GM12878 (cell line): ENCODE measurements at regions of chr16 and their contacts with region 1.

Region 1: DNA sequence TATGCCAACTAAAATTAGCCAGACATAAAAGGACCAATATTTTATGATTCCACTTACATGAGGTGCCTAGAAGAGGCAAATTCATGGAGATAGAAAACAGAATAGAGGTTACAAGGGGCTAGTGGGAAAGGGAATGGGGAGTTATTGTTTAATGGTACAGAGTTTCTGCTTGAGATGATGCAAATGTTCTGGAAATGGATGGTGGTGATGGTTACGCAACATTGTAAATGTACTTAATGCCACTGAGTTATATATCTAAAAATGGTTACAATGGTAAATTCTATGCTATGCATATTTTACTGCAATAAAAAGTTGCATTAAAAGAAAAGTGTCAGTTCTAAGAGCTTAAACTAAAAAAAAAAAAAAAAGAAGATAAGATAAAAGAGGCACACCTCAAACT is 17.9 kb downstream of the MT1X start:
- DNase-seq: no peak
- ATAC-seq: no peak
- H3K4me3 ChIP-seq: no peak overlapping the region
- H3K27ac ChIP-seq: no peak overlapping the region
- H3K4me1 ChIP-seq: no peaks in the 10 kb centered on the region; the same call in 1 of the 2 replicates
- H3K27me3 ChIP-seq: no peaks in the 10 kb centered on the region; a peak in 2 of 4 replicates
- CTCF ChIP-seq: no peak
- EP300 ChIP-seq: no peak
- POLR2A ChIP-seq: no peak
- RAD21 ChIP-seq: no peak

Region 2: GRCh38 chr16:56356276-56357240 is 343.6 kb before region 1 on chr16:
- CTCF ChIA-PET with region 1: interaction called, 12 read pairs
- POLR2A ChIA-PET with region 1: no interaction called
- RAD21 ChIA-PET with region 1: no interaction called
- SMC1A ChIA-PET with region 1: interaction called, 4 read pairs
- in situ Hi-C with region 1: no loop called
- intact Hi-C with region 1: no loop called
- DNase-seq: peak; percentile 46
- ATAC-seq: peak; percentile 98
- H3K4me3 ChIP-seq: peak overlapping the region; percentile 61
- H3K27ac ChIP-seq: peak overlapping the region; percentile 35
- H3K4me1 ChIP-seq: peaks cover 12% of the 10 kb centered on the region
- H3K27me3 ChIP-seq: no peaks in the 10 kb centered on the region
- CTCF ChIP-seq: peak; percentile 81 to 96 (median 87)
- EP300 ChIP-seq: 0 out of 4 replicates have a peak, but pooled peaks of 1 of the 2 experiments have one; percentile 1
- POLR2A ChIP-seq: no peak
- RAD21 ChIP-seq: peak; percentile 52

Region 3: GRCh38 chr16:56547120-56547948 is 152.9 kb before region 1 on chr16:
- CTCF ChIA-PET with region 1: interaction called, 13 read pairs
- POLR2A ChIA-PET with region 1: no interaction called
- RAD21 ChIA-PET with region 1: interaction called, 4 read pairs
- SMC1A ChIA-PET with region 1: interaction called, 4 read pairs
- in situ Hi-C with region 1: no loop called
- intact Hi-C with region 1: no loop called
- DNase-seq: no peak
- ATAC-seq: peak; percentile 45
- H3K4me3 ChIP-seq: no peak overlapping the region
- H3K27ac ChIP-seq: no peak overlapping the region
- H3K4me1 ChIP-seq: peaks cover 7% of the 10 kb centered on the region
- H3K27me3 ChIP-seq: peaks cover 0 to 2% of the 10 kb centered on the region in 2 experiments; a peak in 1 of 4 replicates
- CTCF ChIP-seq: no peak
- EP300 ChIP-seq: no peak
- POLR2A ChIP-seq: no peak
- RAD21 ChIP-seq: no peak

Region 4: GRCh38 chr16:56583351-56584168 is 116.6 kb before region 1 on chr16:
- CTCF ChIA-PET with region 1: interaction called, 11 read pairs
- POLR2A ChIA-PET with region 1: no interaction called
- RAD21 ChIA-PET with region 1: interaction called, 4 read pairs
- SMC1A ChIA-PET with region 1: interaction called, 10 read pairs
- in situ Hi-C with region 1: loop called (anchors 5 kb)
- intact Hi-C with region 1: no loop called
- DNase-seq: no peak
- ATAC-seq: no peak
- H3K4me3 ChIP-seq: no peak overlapping the region
- H3K27ac ChIP-seq: no peak overlapping the region
- H3K4me1 ChIP-seq: no peaks in the 10 kb centered on the region
- H3K27me3 ChIP-seq: peaks cover 2 to 4% of the 10 kb centered on the region in 2 experiments; a peak in 1 of 4 replicates
- CTCF ChIP-seq: no peak
- EP300 ChIP-seq: no peak
- POLR2A ChIP-seq: no peak
- RAD21 ChIP-seq: no peak

Region 5: DNA sequence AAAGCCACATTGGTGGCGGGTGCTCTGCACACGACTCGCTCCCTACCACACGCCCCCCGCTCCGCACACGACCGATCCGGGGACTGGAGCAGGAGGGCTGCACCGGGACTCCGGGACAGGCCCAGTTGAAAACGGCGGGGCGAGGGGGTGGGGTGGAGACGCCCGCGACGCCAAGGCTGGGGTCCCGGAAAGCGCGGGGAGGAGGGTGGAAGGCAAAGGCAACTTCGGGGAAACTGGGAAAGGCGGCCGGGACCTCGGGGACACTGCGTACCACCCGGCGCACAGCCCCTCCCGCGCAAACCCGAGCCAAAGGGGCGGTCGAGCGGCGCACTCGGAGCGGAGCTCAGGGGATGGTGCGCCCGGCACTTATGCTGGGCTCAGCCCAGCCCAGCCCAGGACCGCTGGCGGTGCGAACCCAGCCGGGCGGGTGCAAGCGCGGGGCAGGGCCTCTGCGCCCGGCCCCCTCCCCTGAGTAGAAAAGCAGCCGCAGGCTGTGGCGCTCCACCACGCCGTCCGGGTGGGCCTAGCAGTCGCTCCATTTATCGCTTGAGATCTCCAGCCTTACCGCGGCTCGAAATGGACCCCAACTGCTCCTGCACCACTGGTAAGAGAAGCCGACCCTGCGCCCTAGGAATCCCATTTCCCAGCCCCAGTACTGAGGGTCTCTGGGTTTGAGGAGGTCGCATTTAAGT is 67.9 kb before region 1 on chr16 and contains the start of gene MT1M:
- CTCF ChIA-PET with region 1: interaction called, 13 read pairs
- POLR2A ChIA-PET with region 1: no interaction called
- RAD21 ChIA-PET with region 1: interaction called, 11 read pairs
- SMC1A ChIA-PET with region 1: interaction called, 6 read pairs
- in situ Hi-C with region 1: no loop called
- intact Hi-C with region 1: no loop called
- DNase-seq: no peak
- ATAC-seq: peak; percentile 23
- H3K4me3 ChIP-seq: no peak within 1 kb of the TSS
- H3K27ac ChIP-seq: no peak within 1 kb of the TSS
- H3K4me1 ChIP-seq: peaks cover 15% of the 10 kb centered on the region
- H3K27me3 ChIP-seq: peaks cover 14 to 24% of the 10 kb centered on the region in 2 experiments
- CTCF ChIP-seq: no peak
- EP300 ChIP-seq: no peak
- POLR2A ChIP-seq: no peak
- RAD21 ChIP-seq: no peak
- polyA plus RNA-seq, gene MT1M: not detected

Region 6: GRCh38 chr16:56716761-56717160 is 16.6 kb after region 1 on chr16:
- CTCF ChIA-PET with region 1: interaction called, 45 read pairs
- POLR2A ChIA-PET with region 1: no interaction called
- RAD21 ChIA-PET with region 1: interaction called, 18 read pairs
- SMC1A ChIA-PET with region 1: interaction called, 19 read pairs
- in situ Hi-C with region 1: no loop called
- intact Hi-C with region 1: no loop called
- DNase-seq: no peak
- ATAC-seq: no peak
- H3K4me3 ChIP-seq: no peak overlapping the region
- H3K27ac ChIP-seq: no peak overlapping the region
- H3K4me1 ChIP-seq: peaks cover 2% of the 10 kb centered on the region; the same call in 1 of the 2 replicates
- H3K27me3 ChIP-seq: no peaks in the 10 kb centered on the region
- CTCF ChIP-seq: no peak
- EP300 ChIP-seq: no peak
- POLR2A ChIP-seq: no peak
- RAD21 ChIP-seq: no peak